Endothelial cell of umbilical vein (primary cell): ENCODE measurements at regions of chr15 and their contacts with region 1.

Region 1: GRCh38 chr15:72554471-72555425 is 80.6 kb downstream of the ARIH1 start:
- DNase-seq: peak; percentile 67
- H3K4me3 ChIP-seq: no peak overlapping the region
- H3K27ac ChIP-seq: peak overlapping the region; percentile 22
- H3K4me1 ChIP-seq: peaks cover 14% of the 10 kb centered on the region
- H3K27me3 ChIP-seq: no peaks in the 10 kb centered on the region
- CTCF ChIP-seq: no peak
- POLR2A ChIP-seq: no peak

Region 2: DNA sequence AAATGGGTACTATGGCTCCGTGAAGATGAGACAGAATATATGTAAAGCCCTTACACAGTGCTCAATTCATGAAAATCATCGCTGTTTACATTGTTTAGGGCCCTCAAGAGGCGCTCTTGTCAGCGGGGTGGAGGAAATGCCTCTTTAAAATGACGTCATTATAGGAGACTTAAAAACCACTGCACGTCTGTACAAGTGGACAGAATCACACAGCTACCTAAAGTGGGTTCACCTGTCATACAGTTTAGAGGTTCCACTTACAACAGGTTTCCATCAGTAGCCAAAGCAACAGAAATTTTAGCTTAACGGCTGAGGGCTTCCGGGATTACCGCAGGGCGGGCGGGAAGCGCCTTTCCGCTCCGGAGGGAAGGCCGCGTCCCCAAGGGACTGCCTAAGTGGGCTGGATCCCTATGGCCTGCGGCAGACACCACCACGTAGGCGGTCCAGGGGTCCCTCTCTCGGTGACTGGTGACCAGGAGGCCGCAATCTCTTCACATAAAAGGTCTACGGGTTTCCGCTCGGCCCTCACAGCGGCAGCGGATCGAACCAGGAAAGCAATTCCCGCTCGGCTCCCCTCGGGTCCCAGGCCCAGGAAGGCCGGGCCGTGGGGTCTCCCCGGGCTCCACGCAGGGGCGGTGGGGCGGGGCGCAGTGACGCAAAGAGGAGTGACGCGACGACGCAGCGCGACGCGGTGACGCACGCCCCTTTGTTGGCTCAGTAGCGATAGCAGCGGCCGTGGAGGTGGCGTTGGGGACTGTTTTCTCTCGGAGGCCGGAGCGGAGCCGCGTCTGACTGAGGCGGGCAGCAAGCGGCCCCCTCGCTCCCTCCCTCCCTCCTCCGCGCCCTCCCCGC is 80.9 kb before region 1 on chr15 and contains the start of gene ARIH1:
- CTCF ChIA-PET with region 1: no interaction called
- POLR2A ChIA-PET with region 1: no interaction called
- dilution Hi-C with region 1: no loop called
- intact Hi-C with region 1: loop called (anchors 2 kb)
- DNase-seq: peak; percentile 96
- H3K4me3 ChIP-seq: peak within 1 kb of the TSS; percentile 94 to 99 (median 99)
- H3K27ac ChIP-seq: peak within 1 kb of the TSS; percentile 97
- H3K4me1 ChIP-seq: peaks cover 27% of the 10 kb centered on the region
- H3K27me3 ChIP-seq: no peaks in the 10 kb centered on the region
- CTCF ChIP-seq: peak; percentile 21 to 23
- POLR2A ChIP-seq: peak; percentile 90
- total RNA-seq, gene ARIH1: 137 and 144 TPM in 2 replicates

Region 3: DNA sequence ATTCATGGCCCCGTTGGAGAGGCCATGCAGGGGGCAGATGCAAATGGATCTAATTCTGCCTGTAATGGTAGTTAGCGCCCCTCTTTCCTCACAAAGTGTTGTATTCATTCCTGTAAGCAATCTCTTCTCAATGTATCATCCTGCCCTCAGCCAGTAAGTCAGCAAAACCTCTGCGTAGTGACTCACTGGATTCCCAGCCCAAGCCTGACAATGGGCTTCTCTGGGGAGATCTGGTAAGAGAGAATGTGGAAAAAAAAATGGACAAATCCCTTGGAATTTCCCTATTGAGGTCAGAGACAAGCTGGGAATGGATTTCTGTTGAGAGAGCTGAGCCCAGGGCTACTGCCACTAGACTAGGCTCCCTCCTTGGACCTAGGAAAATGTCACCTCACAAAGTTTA is 203.4 kb after region 1 on chr15:
- CTCF ChIA-PET with region 1: no interaction called
- POLR2A ChIA-PET with region 1: no interaction called
- dilution Hi-C with region 1: no loop called
- intact Hi-C with region 1: no loop called
- DNase-seq: peak; percentile 68
- H3K4me3 ChIP-seq: no peak overlapping the region
- H3K27ac ChIP-seq: peak overlapping the region; percentile 67
- H3K4me1 ChIP-seq: peaks cover 11% of the 10 kb centered on the region
- H3K27me3 ChIP-seq: no peaks in the 10 kb centered on the region
- CTCF ChIP-seq: no peak
- POLR2A ChIP-seq: no peak

Region 4: DNA sequence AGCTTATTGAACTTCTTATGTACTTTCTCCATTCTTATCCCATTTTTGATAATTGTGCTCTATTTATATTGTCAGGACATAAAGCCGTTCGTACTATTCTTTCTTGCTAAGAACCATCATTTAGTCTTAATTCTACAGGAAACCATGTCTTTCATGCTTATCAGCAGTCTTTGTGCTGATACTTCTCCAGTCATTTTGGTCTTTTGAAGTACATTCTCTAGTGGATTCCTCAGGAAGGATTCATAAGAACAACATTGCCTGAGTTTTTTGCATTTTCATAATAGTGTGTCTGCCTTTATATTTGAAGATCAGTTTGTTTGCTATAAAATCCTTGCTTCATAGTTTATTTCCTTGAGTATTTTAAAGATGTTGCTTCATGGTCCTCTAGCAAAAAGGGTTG is 370.9 kb after region 1 on chr15:
- CTCF ChIA-PET with region 1: no interaction called
- POLR2A ChIA-PET with region 1: no interaction called
- dilution Hi-C with region 1: no loop called
- intact Hi-C with region 1: no loop called
- DNase-seq: no peak
- H3K4me3 ChIP-seq: no peak overlapping the region
- H3K27ac ChIP-seq: no peak overlapping the region
- H3K4me1 ChIP-seq: no peaks in the 10 kb centered on the region
- H3K27me3 ChIP-seq: peaks cover 0 to 2% of the 10 kb centered on the region in 2 experiments
- CTCF ChIP-seq: no peak
- POLR2A ChIP-seq: no peak